Caco-2 (cell line): ENCODE measurements at regions of chr11 and their contacts with region 1.

Region 1: GRCh38 chr11:118145285-118146227 is 7.1 kb downstream of the SCN4B start:
- DNase-seq: peak; percentile 96 to 99
- H3K4me3 ChIP-seq: peak overlapping the region; percentile 84
- H3K4me3 Mint-ChIP-seq: peak overlapping the region; percentile 81
- H3K27ac Mint-ChIP-seq: no peak overlapping the region
- H3K4me1 ChIP-seq: peaks cover 7% of the 10 kb centered on the region
- H3K4me1 Mint-ChIP-seq: peaks cover 17% of the 10 kb centered on the region
- H3K27me3 ChIP-seq: peaks cover 2% of the 10 kb centered on the region
- H3K27me3 Mint-ChIP-seq: peaks cover 13% of the 10 kb centered on the region
- CTCF ChIP-seq: peak; percentile 98 to 99

Region 2: GRCh38 chr11:118076754-118077281 is 68.7 kb before region 1 on chr11 and contains the start of gene TMPRSS4:
- CTCF ChIA-PET with region 1: no interaction called
- POLR2A ChIA-PET with region 1: no interaction called
- intact Hi-C with region 1: loop called (anchors 5 kb)
- DNase-seq: peak; percentile 93 to 98
- H3K4me3 ChIP-seq: peak within 1 kb of the TSS; percentile 35
- H3K4me3 Mint-ChIP-seq: peak within 1 kb of the TSS; percentile 64
- H3K27ac Mint-ChIP-seq: peak within 1 kb of the TSS; percentile 98
- H3K4me1 ChIP-seq: peaks cover 33% of the 10 kb centered on the region
- H3K4me1 Mint-ChIP-seq: peaks cover 42% of the 10 kb centered on the region
- H3K27me3 ChIP-seq: no peaks in the 10 kb centered on the region
- H3K27me3 Mint-ChIP-seq: no peaks in the 10 kb centered on the region
- CTCF ChIP-seq: no peak
- total RNA-seq, gene TMPRSS4: 83.2 and 86.4 TPM in 2 replicates

Region 3: DNA sequence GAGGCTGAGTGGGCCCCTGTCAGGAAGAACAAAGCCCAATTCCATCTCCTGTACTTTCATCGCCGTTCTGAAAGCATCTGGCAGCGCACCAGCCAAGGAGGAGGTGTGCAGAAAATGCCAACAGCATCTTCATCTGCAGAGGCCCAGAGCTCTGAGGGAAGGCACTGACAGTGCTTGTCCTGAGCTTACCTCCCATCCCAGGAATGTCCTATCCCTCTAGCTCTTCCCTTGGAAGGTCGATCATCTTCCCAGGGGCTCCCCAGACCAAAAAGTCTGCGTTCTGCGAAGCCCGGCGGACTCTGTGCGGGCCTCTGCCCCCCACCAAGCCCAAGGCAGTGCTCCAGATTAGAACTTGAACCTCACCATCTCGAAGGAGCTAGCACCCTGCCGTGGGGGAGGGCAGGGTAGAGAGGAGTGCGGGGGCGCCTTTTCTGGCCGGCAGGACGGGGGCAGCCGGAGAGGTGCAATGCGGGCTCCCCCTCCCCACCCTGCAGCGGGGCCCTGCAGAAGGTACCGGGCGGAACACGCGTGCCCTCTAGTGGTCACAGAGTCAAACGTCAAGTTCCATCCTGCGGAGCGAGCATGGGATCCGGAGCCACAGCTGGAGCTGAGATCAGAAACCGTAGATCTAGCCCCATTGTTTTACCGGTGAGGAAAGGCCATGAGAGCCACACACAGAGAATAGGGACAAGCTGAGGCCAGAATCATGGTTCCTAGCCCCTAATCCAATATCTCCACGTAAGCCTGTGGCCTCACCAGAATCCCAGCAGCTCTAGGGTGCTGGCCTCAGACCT is 25.9 kb after region 1 on chr11:
- CTCF ChIA-PET with region 1: interaction called, 36 read pairs
- POLR2A ChIA-PET with region 1: no interaction called
- intact Hi-C with region 1: loop called (anchors 1 kb)
- DNase-seq: peak; percentile 82 to 89
- H3K4me3 ChIP-seq: no peak overlapping the region
- H3K4me3 Mint-ChIP-seq: no peak overlapping the region
- H3K27ac Mint-ChIP-seq: no peak overlapping the region
- H3K4me1 ChIP-seq: peaks cover 3% of the 10 kb centered on the region; the same call in 1 of the 2 replicates
- H3K4me1 Mint-ChIP-seq: peaks cover 24% of the 10 kb centered on the region
- H3K27me3 ChIP-seq: no peaks in the 10 kb centered on the region; the same call in 1 of the 2 replicates
- H3K27me3 Mint-ChIP-seq: no peaks in the 10 kb centered on the region
- CTCF ChIP-seq: peak; percentile 98 to 99

Region 4: DNA sequence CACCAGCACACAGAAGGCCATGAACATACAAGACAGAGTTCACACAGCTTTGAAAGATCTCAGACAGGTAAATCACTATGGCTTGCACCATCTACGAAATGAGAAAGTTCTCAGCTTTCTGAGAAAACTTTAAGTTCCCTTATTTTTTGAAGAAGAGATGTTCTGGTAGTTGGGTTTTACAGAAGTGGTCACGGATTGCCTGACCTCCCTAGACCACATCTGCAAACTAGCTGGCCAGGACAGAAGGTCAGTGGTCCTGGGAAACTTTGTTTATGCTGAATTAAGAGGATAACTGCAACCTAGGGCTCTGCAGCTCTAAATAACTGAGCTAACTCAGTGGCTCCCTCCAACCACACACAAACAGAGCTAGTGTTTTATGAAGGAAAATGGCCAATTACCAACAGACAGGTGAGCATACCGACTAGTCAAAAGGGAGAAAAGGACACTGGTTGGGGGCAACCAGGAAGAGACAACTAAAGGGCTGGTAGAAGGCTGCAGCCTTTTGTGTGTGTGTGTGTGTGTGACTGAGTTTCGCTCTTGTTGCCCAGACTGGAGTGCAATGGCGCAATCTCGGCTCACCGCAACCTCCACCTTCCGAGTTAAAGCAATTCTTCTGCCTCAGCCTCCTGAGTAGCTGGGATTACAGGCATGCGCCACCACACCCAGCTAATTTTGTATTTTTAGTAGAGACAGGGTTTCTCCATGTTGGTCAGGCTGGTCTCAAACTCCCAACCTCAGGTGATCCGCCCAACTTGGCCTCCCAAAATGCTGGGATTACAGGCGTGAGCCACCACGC is 39.4 kb after region 1 on chr11:
- CTCF ChIA-PET with region 1: no interaction called
- POLR2A ChIA-PET with region 1: no interaction called
- intact Hi-C with region 1: no loop called
- DNase-seq: no peak
- H3K4me3 ChIP-seq: no peak overlapping the region
- H3K4me3 Mint-ChIP-seq: no peak overlapping the region
- H3K27ac Mint-ChIP-seq: no peak overlapping the region
- H3K4me1 ChIP-seq: 0 out of 2 replicates have a peak, but pooled peaks cover 4% of the 10 kb centered on the region
- H3K4me1 Mint-ChIP-seq: no peaks in the 10 kb centered on the region
- H3K27me3 ChIP-seq: no peaks in the 10 kb centered on the region
- H3K27me3 Mint-ChIP-seq: peaks cover 4% of the 10 kb centered on the region
- CTCF ChIP-seq: no peak

Region 5: GRCh38 chr11:118353084-118353710 is 207.6 kb after region 1 on chr11:
- CTCF ChIA-PET with region 1: interaction called, 6 read pairs
- POLR2A ChIA-PET with region 1: no interaction called
- intact Hi-C with region 1: loop called (anchors 5 kb)
- DNase-seq: peak in 1 of 2 experiments; percentile 47
- H3K4me3 ChIP-seq: no peak overlapping the region
- H3K4me3 Mint-ChIP-seq: no peak overlapping the region
- H3K27ac Mint-ChIP-seq: no peak overlapping the region
- H3K4me1 ChIP-seq: peaks cover 8% of the 10 kb centered on the region; the same call in 1 of the 2 replicates
- H3K4me1 Mint-ChIP-seq: peaks cover 9% of the 10 kb centered on the region
- H3K27me3 ChIP-seq: no peaks in the 10 kb centered on the region
- H3K27me3 Mint-ChIP-seq: no peaks in the 10 kb centered on the region
- CTCF ChIP-seq: peak; percentile 55 to 81

Region 6: DNA sequence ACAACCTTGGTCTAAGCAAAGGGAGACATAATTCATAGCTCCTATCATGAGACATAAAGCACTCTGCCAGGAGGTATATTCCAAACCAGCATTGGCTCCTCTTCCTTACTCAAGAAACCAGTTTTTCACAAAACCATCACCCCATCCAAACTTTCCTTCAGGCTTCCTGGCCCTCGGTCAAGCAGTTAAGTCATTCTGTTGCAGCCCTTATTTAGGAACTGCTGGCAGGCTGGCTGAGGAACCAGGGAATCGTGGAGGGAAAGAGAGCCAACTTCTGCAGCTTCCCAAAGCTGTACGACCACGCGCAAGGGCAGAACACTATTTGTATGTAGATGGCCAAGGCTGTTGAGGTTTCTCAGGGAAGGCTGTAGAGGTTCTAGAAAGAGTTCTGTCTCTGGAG is 419.5 kb after region 1 on chr11:
- CTCF ChIA-PET with region 1: no interaction called
- POLR2A ChIA-PET with region 1: interaction called, 3 read pairs
- intact Hi-C with region 1: loop called (anchors 1 kb)
- DNase-seq: no peak
- H3K4me3 ChIP-seq: 0 out of 2 replicates have a peak overlapping the region, but pooled peaks have one; percentile 6
- H3K4me3 Mint-ChIP-seq: peak overlapping the region; percentile 95
- H3K27ac Mint-ChIP-seq: no peak overlapping the region
- H3K4me1 ChIP-seq: no peaks in the 10 kb centered on the region
- H3K4me1 Mint-ChIP-seq: peaks cover 9% of the 10 kb centered on the region
- H3K27me3 ChIP-seq: no peaks in the 10 kb centered on the region
- H3K27me3 Mint-ChIP-seq: no peaks in the 10 kb centered on the region
- CTCF ChIP-seq: no peak